Gastrocnemius medialis (tissue), 4 donors: ENCODE measurements at regions of chr3 and their contacts with region 1.

Region 1: DNA sequence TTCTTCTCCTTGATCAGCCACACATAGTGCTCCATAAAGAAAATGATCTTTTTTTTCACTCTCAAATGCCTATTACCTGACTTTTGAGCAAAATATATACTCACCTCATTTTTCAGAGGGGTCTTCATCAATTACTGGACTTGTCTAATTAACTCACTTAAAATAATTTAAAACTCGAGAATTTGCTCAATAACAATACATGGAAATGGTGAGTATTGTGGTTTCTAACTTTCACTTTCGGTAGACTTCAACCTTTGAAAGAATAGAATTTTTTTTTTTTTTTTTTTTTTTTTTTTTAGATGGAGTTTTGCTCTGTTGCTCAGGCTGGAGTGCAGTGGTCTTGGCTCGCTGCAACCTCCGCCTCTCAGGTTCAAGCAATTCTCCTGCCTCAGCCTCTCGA is 17.7 kb upstream of the EPHB1 start:
- DNase-seq: no peak
- ATAC-seq: no peak
- H3K4me3 ChIP-seq: no peak overlapping the region
- H3K27ac ChIP-seq: no peak overlapping the region
- H3K4me1 ChIP-seq: no peaks in the 10 kb centered on the region
- H3K27me3 ChIP-seq: no peaks in the 10 kb centered on the region
- CTCF ChIP-seq: no peak
- POLR2A ChIP-seq: no peak

Region 2: DNA sequence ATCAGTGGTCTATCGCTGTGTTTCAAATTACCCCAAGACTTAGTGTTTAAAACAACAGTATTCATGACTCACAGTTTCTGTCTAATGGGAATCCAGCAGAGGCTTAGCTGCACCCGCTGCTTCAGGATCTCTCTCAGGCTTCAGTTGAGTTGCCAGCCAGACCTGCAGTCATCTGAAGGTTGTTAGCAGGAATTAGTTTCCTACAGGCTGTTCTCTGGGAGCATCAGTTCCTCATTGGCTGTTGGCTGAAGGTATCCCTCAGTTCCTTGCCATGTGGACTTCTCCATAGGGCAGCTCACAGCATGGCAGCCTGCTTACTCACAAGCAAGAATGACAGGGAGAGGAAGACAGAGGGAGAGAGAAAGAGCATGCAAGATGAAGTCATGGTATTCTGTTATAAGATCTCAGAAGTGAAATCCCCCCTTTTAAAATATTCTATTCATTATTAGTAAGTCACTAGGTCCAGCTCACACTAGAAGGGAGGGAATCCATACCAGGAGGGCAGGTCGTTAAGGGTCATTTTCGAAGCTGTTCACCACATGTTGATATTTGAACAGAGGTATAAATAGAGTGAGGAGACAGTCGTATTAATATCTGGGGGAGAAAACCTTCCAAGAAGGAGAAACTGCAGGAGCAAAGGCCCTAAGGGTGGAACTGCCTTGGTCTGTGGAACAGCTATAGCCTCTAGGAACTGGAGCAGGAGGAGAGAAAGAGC is 714.3 kb after region 1 on chr3:
- in situ Hi-C with region 1: loop called in 1 of 4 experiments (anchors 10 kb)
- intact Hi-C with region 1: no loop called
- DNase-seq: peak in 1 of 2 donors; percentile 15
- ATAC-seq: peak in 1 of 2 donors; percentile 87
- H3K4me3 ChIP-seq: no peak overlapping the region
- H3K27ac ChIP-seq: peak overlapping the region in 1 of 4 donors; percentile 36
- H3K4me1 ChIP-seq: peaks cover 0 to 7% of the 10 kb centered on the region in 2 donors
- H3K27me3 ChIP-seq: no peaks in the 10 kb centered on the region
- CTCF ChIP-seq: no peak
- POLR2A ChIP-seq: no peak